ENCODE measurements at regions of chr1 and their contacts with region 1.

Region 1: DNA sequence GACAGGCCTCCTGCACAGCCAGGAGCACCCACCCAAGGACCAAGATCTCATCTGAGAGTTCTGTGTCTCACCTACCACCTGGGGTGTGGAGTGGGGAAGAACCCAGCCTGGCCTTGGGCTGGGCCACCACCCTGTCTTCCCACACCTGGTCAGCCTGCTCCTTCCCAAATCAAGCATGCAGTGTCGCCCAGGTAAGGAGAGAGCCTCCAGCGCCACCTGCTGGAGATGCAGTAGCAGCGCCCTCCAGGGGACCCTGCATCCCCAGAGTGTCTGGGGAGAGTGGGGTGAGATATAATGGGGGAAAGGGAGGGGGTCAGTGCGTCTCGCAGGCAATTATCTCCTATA is 32.3 kb downstream of the KIAA2013 start:
- DNase-seq: peak; percentile 66 to 82 (median 74)
- ATAC-seq: peak; percentile 95
- H3K4me3 ChIP-seq: no peak overlapping the region
- H3K4me1 ChIP-seq: no peaks in the 10 kb centered on the region
- CTCF ChIP-seq: peak; percentile 85

Region 2: GRCh38 chr1:11245904-11246719 is 647.8 kb before region 1 on chr1:
- intact Hi-C with region 1: no loop called
- DNase-seq: no peak
- ATAC-seq: no peak
- H3K4me3 ChIP-seq: no peak overlapping the region
- H3K4me1 ChIP-seq: no peaks in the 10 kb centered on the region
- CTCF ChIP-seq: no peak

Region 3: DNA sequence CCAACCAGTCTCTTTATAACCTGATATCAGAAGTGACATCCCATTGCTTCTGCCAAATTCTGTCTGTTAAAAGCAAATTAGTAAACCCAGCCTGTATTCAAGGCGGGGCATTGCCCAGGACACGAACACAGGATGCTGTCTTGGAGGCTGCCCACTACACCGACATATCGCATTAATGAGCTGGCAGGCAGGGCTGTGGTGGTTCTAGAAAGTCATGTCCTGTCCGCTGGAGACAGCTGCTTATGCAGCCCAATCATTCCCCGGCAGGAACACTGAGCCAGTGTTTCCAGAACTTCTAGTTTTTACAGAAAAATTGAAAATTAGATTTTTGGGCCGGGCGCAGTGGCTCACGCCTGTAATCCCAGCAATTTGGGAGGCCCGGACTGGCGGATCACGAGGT is 112.6 kb before region 1 on chr1:
- intact Hi-C with region 1: no loop called
- DNase-seq: no peak
- ATAC-seq: no peak
- H3K4me3 ChIP-seq: no peak overlapping the region
- H3K4me1 ChIP-seq: peaks cover 3% of the 10 kb centered on the region
- CTCF ChIP-seq: no peak

Region 4: GRCh38 chr1:11838349-11839272 is 55.3 kb before region 1 on chr1:
- intact Hi-C with region 1: loop called (anchors 10 kb)
- DNase-seq: peak; percentile 68 to 81 (median 79)
- ATAC-seq: peak; percentile 93
- H3K4me3 ChIP-seq: no peak overlapping the region
- H3K4me1 ChIP-seq: no peaks in the 10 kb centered on the region
- CTCF ChIP-seq: peak; percentile 94

Region 5: DNA sequence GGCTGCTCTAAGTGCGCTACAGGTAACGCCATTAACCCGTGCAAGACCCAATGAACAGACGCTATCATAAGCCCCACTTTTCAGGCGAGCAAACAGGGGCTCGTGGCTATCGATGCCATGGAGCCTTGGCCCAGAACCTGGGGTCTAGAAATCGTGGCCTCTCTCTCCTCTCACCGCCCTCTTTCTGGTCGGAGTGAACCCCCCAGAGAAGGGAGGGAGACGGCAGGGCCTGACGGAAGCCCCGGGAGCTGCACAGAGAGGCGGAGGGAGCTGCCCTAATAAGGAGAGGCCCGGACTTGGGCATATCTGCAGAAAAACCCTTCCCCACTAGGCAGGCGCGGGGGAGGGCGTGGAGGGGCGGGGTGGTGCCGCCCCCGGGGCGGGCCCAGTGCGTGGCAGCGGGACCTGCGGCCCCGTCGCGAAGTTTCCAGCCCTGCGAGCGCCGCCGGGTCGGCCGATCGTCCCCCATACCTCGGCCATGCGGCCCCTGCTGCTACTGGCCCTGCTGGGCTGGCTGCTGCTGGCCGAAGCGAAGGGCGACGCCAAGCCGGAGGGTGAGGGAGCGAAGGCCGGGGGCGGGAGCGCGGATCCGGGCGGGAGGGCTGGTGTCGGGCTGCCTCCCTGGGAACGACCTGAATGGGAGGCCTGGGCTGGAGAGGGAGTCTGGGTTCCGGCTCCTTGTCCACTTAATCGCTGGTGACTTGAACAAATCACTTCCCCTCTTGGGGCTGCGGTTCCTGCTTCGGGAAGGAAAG is 40.6 kb after region 1 on chr1 and contains the start of gene PLOD1:
- intact Hi-C with region 1: no loop called
- DNase-seq: peak; percentile 90 to 94 (median 91)
- ATAC-seq: peak; percentile 99
- H3K4me3 ChIP-seq: peak within 1 kb of the TSS; percentile 40
- H3K4me1 ChIP-seq: peaks cover 15% of the 10 kb centered on the region
- CTCF ChIP-seq: no peak
- total RNA-seq, gene PLOD1: 33.7 to 68.6 (median 35.4) TPM

Region 6: DNA sequence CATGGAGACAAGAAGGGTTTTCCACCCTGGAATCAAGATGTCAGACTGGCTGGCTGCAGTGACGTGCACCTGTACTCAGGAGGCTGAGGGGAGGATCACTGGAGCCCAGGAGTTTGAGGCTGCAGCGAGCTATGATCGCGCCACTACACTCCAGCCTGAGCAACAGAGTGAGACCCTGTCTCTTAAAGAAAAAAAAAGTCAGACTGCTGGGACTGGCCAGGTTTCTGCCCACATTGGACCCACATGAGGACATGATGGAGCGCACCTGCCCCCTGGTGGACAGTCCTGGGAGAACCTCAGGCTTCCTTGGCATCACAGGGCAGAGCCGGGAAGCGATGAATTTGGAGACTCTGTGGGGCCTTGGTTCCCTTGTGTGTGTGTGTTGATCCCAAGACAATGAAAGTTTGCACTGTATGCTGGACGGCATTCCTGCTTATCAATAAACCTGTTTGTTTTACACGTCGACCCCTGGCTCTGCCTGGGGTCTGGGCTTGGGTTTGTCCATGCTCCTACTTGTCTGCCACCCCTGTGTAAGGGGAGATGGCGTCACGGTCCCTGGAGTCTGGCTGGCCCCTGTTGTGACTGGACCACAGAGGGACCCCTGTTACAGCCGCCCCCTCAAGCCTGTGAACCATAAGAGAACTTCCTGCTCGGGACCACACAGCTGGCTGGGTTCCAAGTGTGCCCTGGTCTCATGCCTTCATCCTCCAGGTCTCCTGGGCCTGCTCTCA is 315.1 kb after region 1 on chr1:
- intact Hi-C with region 1: no loop called
- DNase-seq: peak; percentile 85 to 94 (median 90)
- ATAC-seq: peak; percentile 89
- H3K4me3 ChIP-seq: no peak overlapping the region
- H3K4me1 ChIP-seq: peaks cover 4% of the 10 kb centered on the region
- CTCF ChIP-seq: peak; percentile 88

Measured in mucosa of descending colon (tissue), 3 donors.